Spleen (tissue), 13 donors: ENCODE measurements at regions of chr13 and their contacts with region 1.

Region 1: GRCh38 chr13:24220086-24220703 is 59.7 kb downstream of the SPATA13 start:
- DNase-seq: no peak
- H3K4me3 ChIP-seq: no peak overlapping the region
- H3K27ac ChIP-seq: peak overlapping the region; percentile 15 to 70 (median 38)
- H3K4me1 ChIP-seq: peaks cover 35 to 89% (median 67%) of the 10 kb centered on the region in 6 donors
- H3K27me3 ChIP-seq: no peaks in the 10 kb centered on the region
- CTCF ChIP-seq: peak; percentile 75 to 91 (median 81)
- POLR2A ChIP-seq: no peak

Region 2: DNA sequence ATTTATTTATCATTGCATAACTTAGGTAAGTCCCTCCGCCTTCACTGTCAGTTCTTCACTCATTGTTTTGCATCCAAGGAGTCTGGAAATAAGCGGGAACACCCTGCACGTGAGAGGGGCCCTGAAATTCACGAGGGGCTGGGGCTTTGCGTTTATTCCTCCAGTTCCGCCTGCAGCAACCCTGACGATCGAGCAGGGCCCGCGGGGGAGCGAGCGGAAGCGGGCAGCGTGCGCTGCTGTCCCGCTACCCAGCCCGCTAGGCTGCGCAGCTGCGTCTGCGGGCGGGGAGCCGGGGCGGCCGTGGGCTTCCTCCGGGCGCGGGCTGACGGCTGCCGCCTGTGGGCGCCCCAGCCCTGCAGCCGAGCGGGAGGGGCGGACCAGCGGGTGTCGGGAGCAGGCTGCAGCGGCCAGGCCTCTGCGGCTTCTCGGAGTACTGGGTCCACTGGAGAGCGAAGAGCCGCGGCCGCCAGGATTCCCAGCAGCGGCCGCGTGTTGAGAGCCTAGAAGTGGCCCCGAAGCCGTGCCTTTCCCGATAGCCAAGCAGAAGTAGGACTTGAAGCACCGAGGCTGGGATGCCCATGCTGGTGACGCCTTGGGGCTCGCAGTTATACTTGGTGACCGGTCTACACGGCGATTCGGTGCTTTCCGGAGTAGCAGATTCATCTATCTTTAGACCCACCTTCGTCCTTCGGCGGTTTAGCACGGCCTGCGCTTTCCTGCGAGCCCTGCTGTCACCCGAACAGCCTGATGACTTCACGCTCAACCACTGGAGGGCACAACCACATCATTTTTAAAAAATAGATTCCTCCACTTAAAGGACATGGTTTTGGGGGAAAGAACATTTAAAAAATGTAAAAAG is 753.8 kb before region 1 on chr13:
- intact Hi-C with region 1: loop called (anchors 10 kb)
- DNase-seq: peak; percentile 91
- H3K4me3 ChIP-seq: peak overlapping the region; percentile 42 to 73 (median 50)
- H3K27ac ChIP-seq: peak overlapping the region; percentile 71 to 84 (median 80)
- H3K4me1 ChIP-seq: peaks cover 4 to 24% (median 13%) of the 10 kb centered on the region in 6 donors
- H3K27me3 ChIP-seq: no peaks in the 10 kb centered on the region
- CTCF ChIP-seq: peak; percentile 46 to 85 (median 70)
- POLR2A ChIP-seq: no peak

Region 3: GRCh38 chr13:23921451-23921888 is 298.7 kb before region 1 on chr13:
- intact Hi-C with region 1: loop called (anchors 10 kb)
- DNase-seq: no peak
- H3K4me3 ChIP-seq: no peak overlapping the region
- H3K27ac ChIP-seq: no peak overlapping the region
- H3K4me1 ChIP-seq: peaks cover 0 to 16% (median 3%) of the 10 kb centered on the region in 6 donors
- H3K27me3 ChIP-seq: peaks cover 0 to 3% (median 0%) of the 10 kb centered on the region in 7 donors
- CTCF ChIP-seq: peak; percentile 17 to 75 (median 62)
- POLR2A ChIP-seq: no peak

Region 4: DNA sequence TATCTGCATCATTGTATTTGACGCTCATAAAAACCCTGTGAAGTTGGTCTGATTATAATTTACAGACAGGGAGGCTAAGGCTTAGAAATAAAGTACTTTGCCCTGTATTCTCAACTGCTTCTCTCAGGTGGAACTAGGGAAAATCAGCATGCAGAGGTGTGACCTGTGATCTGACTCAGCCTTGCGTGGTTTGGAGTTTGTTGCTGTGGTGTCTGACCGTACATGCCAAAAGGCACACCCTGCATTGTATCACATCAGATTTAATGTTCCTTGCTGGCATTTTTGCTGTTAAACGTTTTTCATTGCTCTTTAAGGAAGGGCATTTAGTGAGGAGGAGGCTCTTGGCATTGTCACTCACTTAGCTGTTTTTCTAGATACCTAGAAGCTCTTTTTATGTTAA is 264.1 kb before region 1 on chr13:
- intact Hi-C with region 1: no loop called
- DNase-seq: no peak
- H3K4me3 ChIP-seq: no peak overlapping the region
- H3K27ac ChIP-seq: no peak overlapping the region
- H3K4me1 ChIP-seq: no peaks in the 10 kb centered on the region
- H3K27me3 ChIP-seq: no peaks in the 10 kb centered on the region
- CTCF ChIP-seq: no peak
- POLR2A ChIP-seq: no peak

Region 5: GRCh38 chr13:24053519-24054251 is 166.5 kb before region 1 on chr13:
- intact Hi-C with region 1: loop called (anchors 5 kb)
- DNase-seq: no peak
- H3K4me3 ChIP-seq: no peak overlapping the region
- H3K27ac ChIP-seq: peak overlapping the region; percentile 48 to 89 (median 73)
- H3K4me1 ChIP-seq: peaks cover 12 to 64% (median 34%) of the 10 kb centered on the region in 6 donors
- H3K27me3 ChIP-seq: peaks cover 0 to 8% (median 0%) of the 10 kb centered on the region in 7 donors
- CTCF ChIP-seq: peak; percentile 25 to 77 (median 73)
- POLR2A ChIP-seq: no peak